ENCODE measurements at regions of chr15 and their contacts with region 1.

Region 1: DNA sequence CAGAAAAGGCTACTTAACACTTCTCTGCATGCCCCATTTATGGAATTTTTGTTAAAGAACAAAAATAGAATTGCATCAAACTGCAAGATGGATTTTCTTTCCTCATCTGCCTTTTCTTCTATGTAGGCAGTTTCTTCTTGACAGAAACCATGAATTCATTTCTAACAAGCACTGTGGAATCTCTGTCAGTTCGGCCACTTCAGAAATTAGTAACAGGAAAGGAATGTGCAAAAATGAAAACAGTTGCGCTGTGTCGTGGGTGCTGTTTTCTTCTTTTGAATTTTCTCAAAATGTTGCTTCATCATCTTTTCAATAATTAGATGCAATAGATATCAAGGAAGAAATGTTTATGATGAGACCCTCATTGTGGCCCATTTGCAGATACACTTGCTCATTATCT is 151.6 kb downstream of the FOXB1 start:
- DNase-seq: no peak
- H3K4me3 Mint-ChIP-seq: no peak overlapping the region
- H3K27ac Mint-ChIP-seq: peak overlapping the region; percentile 19
- H3K4me1 Mint-ChIP-seq: peaks cover 28% of the 10 kb centered on the region
- H3K27me3 Mint-ChIP-seq: peaks cover 19% of the 10 kb centered on the region

Region 2: GRCh38 chr15:59553879-59554735 is 601.6 kb before region 1 on chr15:
- intact Hi-C with region 1: no loop called
- DNase-seq: no peak
- H3K4me3 Mint-ChIP-seq: no peak overlapping the region
- H3K27ac Mint-ChIP-seq: no peak overlapping the region
- H3K4me1 Mint-ChIP-seq: no peaks in the 10 kb centered on the region
- H3K27me3 Mint-ChIP-seq: peaks cover 11% of the 10 kb centered on the region

Region 3: DNA sequence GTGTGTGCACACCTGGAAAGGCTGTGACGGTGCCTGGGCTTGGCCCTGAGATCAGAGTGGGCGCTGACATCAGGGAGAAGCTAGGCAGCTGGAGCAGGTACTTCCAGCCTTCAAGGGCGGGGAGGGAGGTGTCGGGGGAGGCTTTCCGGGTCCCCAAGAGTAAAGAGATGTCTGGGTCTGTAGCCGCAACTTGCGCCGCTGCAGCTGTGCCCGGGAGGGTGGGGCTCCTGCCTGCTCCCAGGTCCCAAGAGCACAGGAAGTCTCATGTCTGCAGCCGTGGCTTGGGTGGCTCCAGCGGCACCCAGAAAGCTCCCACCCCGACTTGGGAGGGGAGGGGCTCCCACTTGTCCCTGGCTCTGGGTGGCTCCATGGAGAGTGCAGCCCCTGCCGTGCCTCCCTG is 363.3 kb before region 1 on chr15:
- intact Hi-C with region 1: loop called (anchors 10 kb)
- DNase-seq: no peak
- H3K4me3 Mint-ChIP-seq: peak overlapping the region; percentile 54
- H3K27ac Mint-ChIP-seq: peak overlapping the region; percentile 30
- H3K4me1 Mint-ChIP-seq: peaks cover 29% of the 10 kb centered on the region
- H3K27me3 Mint-ChIP-seq: peaks cover 12% of the 10 kb centered on the region

Region 4: DNA sequence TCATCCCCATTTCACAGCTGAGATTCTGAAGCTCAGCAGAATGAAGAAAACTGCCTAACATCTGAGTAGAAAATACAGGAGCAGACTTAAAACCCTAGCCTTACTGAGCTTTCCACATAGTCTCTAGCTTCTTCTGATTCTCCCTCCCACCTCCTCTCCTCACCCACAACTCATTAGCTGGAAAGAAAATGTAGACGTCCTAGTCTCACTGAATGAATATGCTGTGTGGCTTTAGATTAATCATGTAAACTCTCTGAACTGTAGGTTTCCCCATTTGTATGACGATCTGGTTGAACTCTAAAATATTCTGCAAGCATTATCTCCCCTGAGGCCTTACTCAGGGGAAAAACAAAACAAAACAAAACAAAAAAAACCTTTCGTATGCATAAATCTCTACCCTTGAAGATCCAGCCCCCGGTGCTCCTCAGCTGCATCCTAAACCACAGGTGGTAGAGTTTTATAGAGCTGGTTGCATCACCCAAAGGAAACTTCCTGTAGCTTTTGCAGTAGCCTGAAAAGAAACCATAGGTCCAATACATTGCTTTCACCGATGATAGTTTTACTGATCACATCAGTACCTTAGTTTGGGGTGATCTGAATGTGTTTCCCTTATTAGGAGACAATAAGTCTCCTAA is 110.9 kb before region 1 on chr15:
- intact Hi-C with region 1: loop called (anchors 10 kb)
- DNase-seq: peak; percentile 39
- H3K4me3 Mint-ChIP-seq: peak overlapping the region; percentile 6
- H3K27ac Mint-ChIP-seq: peak overlapping the region; percentile 54
- H3K4me1 Mint-ChIP-seq: peaks cover 24% of the 10 kb centered on the region
- H3K27me3 Mint-ChIP-seq: no peaks in the 10 kb centered on the region

Region 5: GRCh38 chr15:60077581-60078359 is 77.9 kb before region 1 on chr15:
- intact Hi-C with region 1: loop called (anchors 2 kb)
- DNase-seq: peak; percentile 3
- H3K4me3 Mint-ChIP-seq: peak overlapping the region; percentile 4
- H3K27ac Mint-ChIP-seq: peak overlapping the region; percentile 75
- H3K4me1 Mint-ChIP-seq: peaks cover 49% of the 10 kb centered on the region
- H3K27me3 Mint-ChIP-seq: peaks cover 2% of the 10 kb centered on the region

Region 6: GRCh38 chr15:60128000-60128376 is 27.7 kb before region 1 on chr15:
- intact Hi-C with region 1: loop called (anchors 1 kb)
- DNase-seq: no peak
- H3K4me3 Mint-ChIP-seq: peak overlapping the region; percentile 82
- H3K27ac Mint-ChIP-seq: peak overlapping the region; percentile 80
- H3K4me1 Mint-ChIP-seq: peaks cover 57% of the 10 kb centered on the region
- H3K27me3 Mint-ChIP-seq: peaks cover 11% of the 10 kb centered on the region

Region 7: GRCh38 chr15:60138397-60138968 is 17.2 kb before region 1 on chr15:
- intact Hi-C with region 1: no loop called
- DNase-seq: no peak
- H3K4me3 Mint-ChIP-seq: no peak overlapping the region
- H3K27ac Mint-ChIP-seq: no peak overlapping the region
- H3K4me1 Mint-ChIP-seq: no peaks in the 10 kb centered on the region
- H3K27me3 Mint-ChIP-seq: peaks cover 40% of the 10 kb centered on the region

Region 8: DNA sequence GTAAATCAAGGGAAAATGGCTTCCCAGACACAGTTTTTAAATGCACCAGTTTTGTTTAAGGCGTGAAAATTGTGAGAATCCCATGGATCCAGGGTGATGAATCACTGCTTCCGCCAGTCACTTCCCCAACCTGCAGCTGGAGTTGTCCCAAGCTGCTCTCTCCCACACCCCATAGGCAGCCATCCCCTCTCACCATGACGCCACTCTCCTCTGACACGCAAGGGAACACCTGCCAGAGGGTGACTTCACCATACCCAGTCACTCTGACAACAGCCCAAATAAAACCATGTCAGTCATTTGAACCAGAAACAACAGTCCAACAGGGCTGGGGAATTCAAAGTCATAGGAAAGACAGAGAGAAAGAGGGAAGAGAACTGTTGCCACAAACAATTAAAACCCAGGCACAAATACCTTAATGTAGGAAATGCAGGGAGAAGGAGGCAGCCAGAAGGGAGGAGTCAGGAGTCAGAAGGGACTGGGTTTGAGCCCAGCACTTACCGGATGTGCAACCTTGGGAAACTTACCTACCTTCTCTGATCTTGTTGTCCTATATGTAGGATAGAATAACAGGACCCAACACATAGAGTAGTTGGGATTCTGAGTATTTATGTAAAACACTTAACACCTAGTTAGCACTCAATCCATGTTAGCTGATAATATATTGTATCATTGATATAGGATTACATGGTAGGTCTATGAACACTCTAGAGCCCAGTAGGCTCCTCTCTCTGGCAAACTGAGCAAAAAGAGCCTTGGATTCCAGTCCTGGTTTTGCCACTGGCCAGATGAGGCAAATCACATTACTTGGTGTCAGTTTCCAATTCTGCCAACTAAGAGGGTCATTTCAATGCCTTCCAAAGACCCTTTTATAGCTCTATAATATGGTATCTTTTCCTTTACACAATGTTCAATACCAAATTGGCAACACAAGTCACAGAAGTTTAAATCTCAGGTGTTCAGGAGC is 649.6 kb after region 1 on chr15:
- intact Hi-C with region 1: loop called (anchors 10 kb)
- DNase-seq: no peak
- H3K4me3 Mint-ChIP-seq: no peak overlapping the region
- H3K27ac Mint-ChIP-seq: no peak overlapping the region
- H3K4me1 Mint-ChIP-seq: peaks cover 67% of the 10 kb centered on the region
- H3K27me3 Mint-ChIP-seq: no peaks in the 10 kb centered on the region